Naive thymus-derived CD8-positive, alpha-beta T cell (primary cell): ENCODE measurements at regions of chr17 and their contacts with region 1.

Region 1: GRCh38 chr17:29116804-29117772 is 63.1 kb downstream of the MYO18A start:
- DNase-seq: peak; percentile 53 to 85 (median 72)
- ATAC-seq: peak; percentile 81 to 85
- H3K4me3 Mint-ChIP-seq: peak overlapping the region in 1 of 10 donors; percentile 43
- H3K27ac Mint-ChIP-seq: peak overlapping the region in 2 of 10 donors; percentile 18 to 61
- H3K4me1 Mint-ChIP-seq: peaks cover 5 to 12% (median 8%) of the 10 kb centered on the region in 4 donors
- H3K27me3 Mint-ChIP-seq: no peaks in the 10 kb centered on the region

Region 2: DNA sequence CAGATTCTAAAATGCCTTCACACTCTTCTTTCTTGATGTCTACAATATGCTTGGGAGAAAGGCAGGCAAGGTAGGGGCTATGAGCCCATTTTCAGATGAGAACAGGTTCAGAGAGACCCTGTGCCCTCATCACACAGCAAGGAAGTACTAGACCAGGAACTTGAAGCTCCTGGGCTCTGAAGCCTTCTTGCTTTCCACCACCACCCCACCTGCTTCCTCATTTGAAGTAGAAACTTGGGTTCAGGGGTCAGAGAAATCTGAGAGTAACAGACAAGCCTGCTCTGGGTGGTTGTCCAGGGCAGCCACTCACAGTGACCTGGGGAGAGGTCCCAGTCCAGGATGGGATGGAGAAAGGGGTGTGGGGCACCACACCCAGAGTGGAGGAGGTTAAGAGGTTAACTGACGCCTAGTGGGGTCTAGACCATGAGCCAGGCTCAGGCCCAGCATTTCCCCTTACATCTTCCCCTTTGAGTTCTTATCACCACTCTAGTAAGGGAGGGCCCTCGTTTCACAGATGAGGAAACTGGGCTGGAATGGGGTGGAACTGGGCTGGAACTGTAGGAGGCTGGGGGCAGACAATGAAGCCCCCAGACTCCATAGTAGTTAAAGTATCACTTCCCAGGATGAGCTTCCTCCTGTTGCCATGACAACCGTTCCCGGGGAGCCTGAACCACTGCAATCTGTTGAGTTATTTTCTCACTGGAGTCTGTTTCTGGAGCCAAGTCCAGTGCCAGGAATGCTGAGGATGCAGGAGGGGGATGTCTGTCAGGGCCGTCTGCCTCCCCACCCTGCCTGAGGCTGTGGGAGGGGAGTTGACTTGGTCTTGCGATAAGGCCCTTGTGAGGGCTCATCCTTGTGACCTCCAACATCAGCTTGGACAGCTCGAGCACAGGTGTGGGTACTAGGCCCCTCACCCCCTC is 149.6 kb before region 1 on chr17:
- POLR2A ChIA-PET with region 1: interaction called, 14 read pairs
- DNase-seq: peak in 1 of 10 donors; percentile 38
- ATAC-seq: no peak
- H3K4me3 Mint-ChIP-seq: no peak overlapping the region
- H3K27ac Mint-ChIP-seq: peak overlapping the region in 2 of 10 donors; percentile 19 to 43
- H3K4me1 Mint-ChIP-seq: peaks cover 0 to 7% (median under 1%) of the 10 kb centered on the region in 4 donors
- H3K27me3 Mint-ChIP-seq: peaks cover 3 to 23% (median 13%) of the 10 kb centered on the region in 5 donors

Region 3: GRCh38 chr17:29180034-29180787 is 63.1 kb after region 1 on chr17 and contains the start of gene MYO18A:
- POLR2A ChIA-PET with region 1: no interaction called
- DNase-seq: peak; percentile 56 to 81 (median 75)
- ATAC-seq: peak; percentile 87 to 88
- H3K4me3 Mint-ChIP-seq: peak within 1 kb of the TSS; percentile 38 to 80 (median 60)
- H3K27ac Mint-ChIP-seq: peak within 1 kb of the TSS in 8 of 10 donors; percentile 29 to 81 (median 42)
- H3K4me1 Mint-ChIP-seq: peaks cover 9 to 29% (median 27%) of the 10 kb centered on the region in 4 donors
- H3K27me3 Mint-ChIP-seq: no peaks in the 10 kb centered on the region
- polyA plus RNA-seq, gene MYO18A: 4.6 to 12.6 (median 5.9) TPM